Esophagus muscularis mucosa (tissue), 4 donors: ENCODE measurements at regions of chr9 and their contacts with region 1.

Region 1: GRCh38 chr9:70924895-70925547 is 196.4 kb downstream of the TRPM3 start:
- DNase-seq: no peak
- H3K4me3 ChIP-seq: peak overlapping the region in 2 of 4 donors; percentile 6 to 8
- H3K27ac ChIP-seq: no peak overlapping the region
- H3K4me1 ChIP-seq: peaks cover 0 to 13% (median 0%) of the 10 kb centered on the region in 4 donors
- H3K27me3 ChIP-seq: no peaks in the 10 kb centered on the region
- CTCF ChIP-seq: peak; percentile 48 to 71 (median 49)
- EP300 ChIP-seq: no peak
- POLR2A ChIP-seq: no peak

Region 2: GRCh38 chr9:70639853-70640814 is 284.9 kb before region 1 on chr9:
- intact Hi-C with region 1: loop called (anchors 10 kb)
- DNase-seq: no peak
- H3K4me3 ChIP-seq: no peak overlapping the region
- H3K27ac ChIP-seq: no peak overlapping the region
- H3K4me1 ChIP-seq: peaks cover 0 to 5% (median 0%) of the 10 kb centered on the region in 4 donors
- H3K27me3 ChIP-seq: no peaks in the 10 kb centered on the region
- CTCF ChIP-seq: peak; percentile 56 to 68 (median 58)
- EP300 ChIP-seq: no peak
- POLR2A ChIP-seq: no peak

Region 3: GRCh38 chr9:71249729-71250317 is 324.8 kb after region 1 on chr9:
- intact Hi-C with region 1: loop called (anchors 5 kb)
- DNase-seq: no peak
- H3K4me3 ChIP-seq: no peak overlapping the region
- H3K27ac ChIP-seq: no peak overlapping the region
- H3K4me1 ChIP-seq: no peaks in the 10 kb centered on the region
- H3K27me3 ChIP-seq: peaks cover 0 to 11% (median 0%) of the 10 kb centered on the region in 4 donors
- CTCF ChIP-seq: peak; percentile 35 to 62 (median 54)
- EP300 ChIP-seq: no peak
- POLR2A ChIP-seq: no peak